GM12878 (cell line): ENCODE measurements at regions of chr7 and their contacts with region 1.

Region 1: DNA sequence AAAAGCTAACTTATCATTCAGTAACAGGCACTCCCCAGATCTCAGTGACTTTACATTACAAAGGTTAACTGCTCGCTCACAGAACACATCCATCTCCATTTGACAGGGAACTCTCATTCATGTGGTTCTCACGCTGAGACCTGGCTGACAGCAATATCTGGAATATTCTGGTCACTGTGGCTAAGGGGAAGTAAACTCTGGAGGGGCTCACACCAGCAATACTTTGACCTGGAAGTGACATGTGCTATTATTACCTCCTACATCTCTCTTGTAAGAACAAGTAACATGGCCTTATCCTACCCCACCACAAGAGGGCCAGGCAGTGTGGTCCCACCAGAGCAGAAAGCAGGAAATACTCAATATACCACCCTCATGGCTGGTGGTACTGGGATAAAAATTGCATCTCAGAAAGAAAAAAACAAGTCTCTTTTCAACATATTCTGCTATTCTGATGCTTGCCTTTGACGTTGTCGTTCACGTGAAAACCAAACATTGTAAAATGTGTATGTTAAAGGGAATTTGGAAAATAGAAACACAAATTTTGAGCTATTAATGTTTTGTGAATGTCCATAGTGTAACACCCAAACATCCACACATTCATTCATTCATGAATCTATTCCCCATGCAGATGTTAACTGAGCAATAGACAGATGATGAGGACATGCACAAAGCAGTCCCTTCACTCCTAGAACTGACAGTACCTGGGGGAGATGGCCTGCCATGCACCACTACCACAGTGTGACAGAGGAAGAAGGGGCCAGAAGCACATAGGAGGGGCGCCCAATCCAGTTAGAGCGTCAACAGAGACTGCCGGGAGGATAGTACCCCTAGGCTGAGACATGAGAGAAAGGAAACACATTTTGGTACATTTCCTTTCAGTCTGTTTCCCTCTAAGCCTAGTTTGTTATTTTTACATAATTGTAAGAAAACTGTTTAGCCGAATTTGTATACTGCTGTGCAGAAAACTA is 166.0 kb upstream of the SP4 start:
- DNase-seq: peak; percentile 12
- ATAC-seq: peak; percentile 99
- H3K4me3 ChIP-seq: no peak overlapping the region
- H3K27ac ChIP-seq: no peak overlapping the region
- H3K4me1 ChIP-seq: peaks cover 2% of the 10 kb centered on the region; the same call in 1 of the 2 replicates
- H3K27me3 ChIP-seq: no peaks in the 10 kb centered on the region
- CTCF ChIP-seq: peak; percentile 62 to 79 (median 72)
- EP300 ChIP-seq: no peak
- POLR2A ChIP-seq: no peak
- RAD21 ChIP-seq: peak; percentile 83

Region 2: DNA sequence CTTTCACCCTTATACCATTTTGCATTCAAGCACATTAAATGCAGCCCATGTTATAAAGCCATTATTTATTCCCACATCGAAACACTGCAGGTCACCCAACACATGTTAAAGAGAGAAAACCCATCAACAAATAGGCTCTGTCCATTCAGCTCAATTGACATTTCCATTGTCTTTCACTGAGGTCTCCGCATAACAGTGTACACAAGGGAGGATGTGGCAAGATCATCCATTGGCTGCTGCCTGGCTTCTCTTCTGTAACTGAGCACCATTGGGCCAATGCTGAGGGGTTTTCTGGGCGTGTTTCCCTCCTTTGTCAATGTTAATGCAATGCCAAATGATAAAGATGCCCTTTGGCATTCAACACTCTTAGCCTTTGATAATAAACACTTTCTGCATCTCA is 112.1 kb before region 1 on chr7:
- CTCF ChIA-PET with region 1: no interaction called
- POLR2A ChIA-PET with region 1: no interaction called
- RAD21 ChIA-PET with region 1: no interaction called
- SMC1A ChIA-PET with region 1: no interaction called
- in situ Hi-C with region 1: no loop called
- intact Hi-C with region 1: no loop called
- DNase-seq: no peak
- ATAC-seq: no peak
- H3K4me3 ChIP-seq: no peak overlapping the region
- H3K27ac ChIP-seq: no peak overlapping the region
- H3K4me1 ChIP-seq: no peaks in the 10 kb centered on the region
- H3K27me3 ChIP-seq: no peaks in the 10 kb centered on the region; a peak in 1 of 4 replicates
- CTCF ChIP-seq: no peak
- EP300 ChIP-seq: no peak
- POLR2A ChIP-seq: no peak
- RAD21 ChIP-seq: no peak

Region 3: DNA sequence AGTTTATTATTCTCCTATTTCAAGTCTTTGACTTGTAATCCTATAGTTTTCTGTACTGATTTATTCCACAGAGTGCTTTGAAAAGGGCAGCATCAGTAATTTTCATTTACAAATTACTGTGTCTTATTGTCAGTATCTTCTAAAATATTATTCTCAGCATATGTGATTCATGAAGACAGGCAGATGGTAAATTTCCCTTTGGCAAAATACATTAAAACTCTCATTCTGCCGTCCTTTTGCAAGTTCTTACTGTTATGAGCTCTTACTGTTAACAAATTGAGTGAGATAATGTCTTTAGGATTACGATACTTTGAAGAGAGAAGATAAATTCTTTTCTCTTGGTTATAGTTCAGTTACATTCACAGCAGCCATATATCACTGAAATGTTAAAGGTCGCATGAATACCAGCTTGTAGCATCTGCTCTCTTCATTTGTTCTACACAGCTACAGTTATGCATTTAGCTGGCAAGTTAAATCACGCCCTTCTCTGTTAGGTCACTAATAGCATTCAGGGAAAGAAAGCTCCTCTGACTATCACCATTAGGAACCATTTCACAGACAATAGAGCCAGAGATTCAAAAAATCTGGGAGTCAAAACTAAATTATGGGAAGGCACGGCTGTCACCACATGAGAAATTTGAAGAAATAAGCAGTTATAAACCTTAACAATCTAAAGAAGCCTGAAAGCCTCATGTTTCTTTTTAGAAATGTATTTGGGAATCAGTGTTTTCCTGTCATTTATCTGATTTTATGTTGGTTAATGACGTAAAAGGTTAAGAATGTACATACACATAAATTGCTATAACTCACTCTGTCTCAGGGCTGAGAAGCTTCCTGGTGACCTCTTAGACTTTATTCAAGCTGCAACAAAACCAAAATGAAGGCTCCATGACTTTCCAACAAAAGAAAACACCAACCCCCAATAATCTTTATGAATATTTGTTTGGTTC is 56.3 kb after region 1 on chr7:
- CTCF ChIA-PET with region 1: no interaction called
- POLR2A ChIA-PET with region 1: no interaction called
- RAD21 ChIA-PET with region 1: interaction called, 3 read pairs
- SMC1A ChIA-PET with region 1: interaction called, 10 read pairs
- in situ Hi-C with region 1: no loop called
- intact Hi-C with region 1: no loop called
- DNase-seq: no peak
- ATAC-seq: no peak
- H3K4me3 ChIP-seq: no peak overlapping the region
- H3K27ac ChIP-seq: no peak overlapping the region
- H3K4me1 ChIP-seq: no peaks in the 10 kb centered on the region
- H3K27me3 ChIP-seq: no peaks in the 10 kb centered on the region
- CTCF ChIP-seq: no peak
- EP300 ChIP-seq: no peak
- POLR2A ChIP-seq: no peak
- RAD21 ChIP-seq: no peak

Region 4: GRCh38 chr7:21352540-21353387 is 90.9 kb after region 1 on chr7:
- CTCF ChIA-PET with region 1: interaction called, 13 read pairs
- POLR2A ChIA-PET with region 1: interaction called, 4 read pairs
- RAD21 ChIA-PET with region 1: interaction called, 37 read pairs
- SMC1A ChIA-PET with region 1: interaction called, 13 read pairs
- in situ Hi-C with region 1: no loop called
- intact Hi-C with region 1: loop called (anchors 2 kb)
- DNase-seq: peak; percentile 93
- ATAC-seq: peak; percentile 86
- H3K4me3 ChIP-seq: peak overlapping the region; percentile 43
- H3K27ac ChIP-seq: peak overlapping the region; percentile 85
- H3K4me1 ChIP-seq: peaks cover 38% of the 10 kb centered on the region
- H3K27me3 ChIP-seq: no peaks in the 10 kb centered on the region
- CTCF ChIP-seq: no peak
- EP300 ChIP-seq: peak; percentile 23 to 83; a peak in 3 of 4 replicates
- POLR2A ChIP-seq: no peak
- RAD21 ChIP-seq: peak; percentile 30; the same call in 1 of the 2 replicates

Region 5: GRCh38 chr7:21412410-21412851 is 150.5 kb after region 1 on chr7:
- CTCF ChIA-PET with region 1: interaction called, 15 read pairs
- POLR2A ChIA-PET with region 1: no interaction called
- RAD21 ChIA-PET with region 1: interaction called, 19 read pairs
- SMC1A ChIA-PET with region 1: interaction called, 21 read pairs
- in situ Hi-C with region 1: no loop called
- intact Hi-C with region 1: no loop called
- DNase-seq: peak; percentile 43
- ATAC-seq: peak; percentile 79
- H3K4me3 ChIP-seq: no peak overlapping the region
- H3K27ac ChIP-seq: peak overlapping the region; percentile 70
- H3K4me1 ChIP-seq: peaks cover 11% of the 10 kb centered on the region
- H3K27me3 ChIP-seq: no peaks in the 10 kb centered on the region
- CTCF ChIP-seq: no peak
- EP300 ChIP-seq: no peak
- POLR2A ChIP-seq: no peak
- RAD21 ChIP-seq: 0 out of 2 replicates have a peak, but pooled peaks have one; percentile 1

Region 6: DNA sequence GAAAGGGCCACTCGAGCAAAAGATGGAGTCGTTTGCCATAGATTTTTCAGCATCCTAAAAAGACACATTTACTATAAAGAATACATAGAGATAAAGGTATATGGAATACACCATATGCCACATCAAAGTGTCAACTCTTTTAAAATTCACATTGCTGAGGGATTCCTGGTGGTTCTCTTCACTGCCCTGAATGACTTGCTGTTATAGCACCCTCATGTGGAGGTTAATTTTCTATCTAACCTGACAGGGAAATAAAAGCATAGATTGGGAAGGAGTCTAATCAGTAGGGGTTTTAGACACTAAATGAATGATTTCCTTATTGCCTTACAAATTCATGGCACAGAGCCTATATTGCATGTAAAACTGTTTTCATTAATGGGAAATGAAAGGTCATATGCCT is 306.9 kb after region 1 on chr7:
- CTCF ChIA-PET with region 1: interaction called, 66 read pairs
- POLR2A ChIA-PET with region 1: interaction called, 3 read pairs
- RAD21 ChIA-PET with region 1: interaction called, 30 read pairs
- SMC1A ChIA-PET with region 1: interaction called, 57 read pairs
- in situ Hi-C with region 1: loop called (anchors 5 kb)
- intact Hi-C with region 1: loop called (anchors 2 kb)
- DNase-seq: no peak
- ATAC-seq: peak; percentile 80
- H3K4me3 ChIP-seq: no peak overlapping the region
- H3K27ac ChIP-seq: no peak overlapping the region
- H3K4me1 ChIP-seq: no peaks in the 10 kb centered on the region
- H3K27me3 ChIP-seq: no peaks in the 10 kb centered on the region
- CTCF ChIP-seq: peak; percentile 27 to 56 (median 30); a peak in 4 of 6 replicates
- EP300 ChIP-seq: no peak
- POLR2A ChIP-seq: no peak
- RAD21 ChIP-seq: peak; percentile 82